ENCODE measurements at regions of chr19 and their contacts with region 1.

Region 1: DNA sequence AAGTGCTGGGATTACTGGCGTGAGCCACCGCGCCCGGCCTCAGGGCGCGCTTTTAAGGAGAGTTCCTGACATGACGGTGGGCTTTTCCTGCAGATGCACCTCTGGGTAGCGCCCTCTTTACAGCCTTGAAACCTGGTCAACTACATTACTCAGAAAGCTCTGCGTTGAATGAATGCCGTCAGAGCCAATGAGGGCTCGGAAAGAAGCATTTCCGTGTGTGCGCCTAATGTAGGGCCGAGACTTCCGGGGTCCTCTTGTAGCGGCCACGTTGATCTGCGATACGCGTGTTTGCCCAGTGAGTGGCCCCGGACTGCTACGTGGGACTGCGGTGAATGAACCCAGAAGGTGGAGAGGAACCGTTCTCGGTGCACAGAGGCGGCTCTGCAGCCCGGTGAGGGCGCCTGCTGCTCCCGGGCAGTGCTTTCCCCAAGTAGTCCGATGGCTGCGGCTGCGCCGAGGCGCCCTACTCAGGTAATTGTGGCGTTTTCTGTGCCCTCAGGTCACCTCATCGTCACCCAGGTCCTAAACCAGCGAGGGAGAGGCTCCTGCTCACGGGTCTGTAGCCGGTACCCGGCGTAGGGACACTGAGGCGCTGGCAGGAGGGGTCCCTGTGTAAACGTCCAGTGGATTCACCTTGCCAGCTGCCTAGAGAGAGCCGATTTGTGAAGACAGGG is 4.9 kb upstream of the ZNF552 start:
- DNase-seq: peak; percentile 84
- H3K4me3 Mint-ChIP-seq: peak overlapping the region; percentile 95
- H3K27ac Mint-ChIP-seq: peak overlapping the region; percentile 94
- H3K4me1 Mint-ChIP-seq: peaks cover 60% of the 10 kb centered on the region
- H3K27me3 Mint-ChIP-seq: no peaks in the 10 kb centered on the region

Region 2: DNA sequence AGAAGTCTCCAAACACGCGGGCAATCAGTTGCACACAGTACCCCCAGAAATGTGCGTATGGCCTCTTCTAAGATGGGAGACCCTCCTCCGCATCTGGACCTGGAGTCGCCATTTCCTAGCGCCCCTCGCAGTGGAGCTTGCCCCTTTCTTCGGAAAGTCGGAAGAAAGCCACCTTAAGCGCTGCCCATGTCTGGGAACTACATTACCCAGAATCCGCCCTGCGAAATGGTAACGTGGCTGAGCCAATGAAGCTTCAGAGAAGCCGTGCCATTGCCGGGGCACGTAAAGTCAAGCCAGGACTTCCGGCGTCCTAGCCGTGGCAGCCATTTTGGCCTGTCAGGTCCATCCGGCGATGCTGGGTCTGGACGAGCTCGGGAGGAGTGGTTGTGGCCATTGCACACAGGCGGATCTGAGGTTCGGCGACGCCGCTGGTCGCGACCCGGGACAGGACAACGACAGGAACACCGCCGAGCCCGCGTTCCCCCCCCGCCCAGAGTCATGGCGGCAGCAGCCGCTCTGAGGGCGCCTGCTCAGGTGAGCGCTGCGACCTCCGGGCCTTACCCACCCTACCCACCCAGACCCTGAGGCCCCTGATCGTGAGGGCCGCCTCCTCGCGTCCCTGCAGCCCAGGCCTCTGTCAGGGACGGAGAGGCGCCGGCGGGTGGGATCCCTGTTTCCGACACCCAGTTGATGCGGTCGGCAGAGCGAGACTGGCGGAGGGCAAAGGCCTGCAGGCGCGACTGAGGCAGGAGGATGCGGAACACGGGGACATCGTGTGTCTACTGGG is 50.1 kb before region 1 on chr19 and contains the start of gene ZNF586:
- CTCF ChIA-PET with region 1: no interaction called
- POLR2A ChIA-PET with region 1: interaction called, 10 read pairs
- DNase-seq: peak; percentile 90
- H3K4me3 Mint-ChIP-seq: peak within 1 kb of the TSS; percentile 95
- H3K27ac Mint-ChIP-seq: peak within 1 kb of the TSS; percentile 90
- H3K4me1 Mint-ChIP-seq: peaks cover 37% of the 10 kb centered on the region
- H3K27me3 Mint-ChIP-seq: no peaks in the 10 kb centered on the region
- total RNA-seq, gene ZNF586: 20.1 to 21.8 TPM

Region 3: DNA sequence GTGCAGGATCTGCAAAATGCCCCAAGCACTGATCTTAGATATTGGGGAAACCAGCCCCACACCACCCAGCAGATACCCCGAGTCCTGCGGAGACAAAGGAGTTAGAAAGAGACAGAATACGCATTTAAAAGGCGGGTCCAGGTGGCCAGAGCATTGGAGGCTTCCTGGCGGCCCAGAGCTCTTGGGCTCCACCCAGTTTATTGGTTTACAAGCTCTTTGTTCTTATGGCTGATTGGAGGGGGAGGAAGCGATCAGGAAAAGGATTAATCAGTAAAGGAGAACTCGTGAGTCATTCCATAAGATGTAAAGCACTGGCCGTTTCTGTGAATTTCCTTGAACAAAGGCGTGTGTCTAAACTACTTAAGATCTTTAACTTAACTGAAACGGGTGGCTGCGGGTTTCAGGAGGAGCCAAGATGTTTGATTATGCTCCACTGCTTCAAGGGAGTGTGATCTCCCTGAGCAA is 31.0 kb after region 1 on chr19:
- CTCF ChIA-PET with region 1: interaction called, 4 read pairs
- POLR2A ChIA-PET with region 1: interaction called, 14 read pairs
- DNase-seq: peak; percentile 32
- H3K4me3 Mint-ChIP-seq: peak overlapping the region; percentile 96
- H3K27ac Mint-ChIP-seq: peak overlapping the region; percentile 94
- H3K4me1 Mint-ChIP-seq: peaks cover 31% of the 10 kb centered on the region
- H3K27me3 Mint-ChIP-seq: no peaks in the 10 kb centered on the region

Region 4: DNA sequence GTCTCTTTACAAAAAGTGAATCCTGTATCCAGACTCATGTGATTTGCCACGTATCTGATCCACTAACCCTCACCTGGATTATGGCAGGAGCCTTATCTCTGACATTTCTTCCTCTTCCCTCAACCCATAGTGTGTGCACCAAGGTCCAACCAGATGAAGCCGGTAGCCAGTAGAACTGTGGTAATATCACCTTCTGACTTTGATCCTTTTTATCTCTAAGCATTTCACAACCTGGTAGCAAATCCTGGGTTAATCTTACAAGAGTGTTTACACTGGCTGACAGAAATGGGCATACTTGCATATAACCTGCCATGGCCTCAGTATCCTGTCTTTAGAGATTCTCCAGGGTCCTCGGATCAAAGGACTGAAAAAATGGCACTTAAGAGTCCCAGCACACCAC is 94.9 kb after region 1 on chr19:
- CTCF ChIA-PET with region 1: no interaction called
- POLR2A ChIA-PET with region 1: interaction called, 10 read pairs
- DNase-seq: no peak
- H3K4me3 Mint-ChIP-seq: peak overlapping the region; percentile 47
- H3K27ac Mint-ChIP-seq: no peak overlapping the region
- H3K4me1 Mint-ChIP-seq: peaks cover 31% of the 10 kb centered on the region
- H3K27me3 Mint-ChIP-seq: no peaks in the 10 kb centered on the region

Measured in activated CD4-positive, alpha-beta memory T cell treated with anti-CD3 and anti-CD28 coated beads, Interleukin-2, amount 10 ng/mL, durations not matched to agents 7 days and 5 days (primary cell).